HepG2 (cell line): ENCODE measurements at regions of chr14 and their contacts with region 1.

Region 1: DNA sequence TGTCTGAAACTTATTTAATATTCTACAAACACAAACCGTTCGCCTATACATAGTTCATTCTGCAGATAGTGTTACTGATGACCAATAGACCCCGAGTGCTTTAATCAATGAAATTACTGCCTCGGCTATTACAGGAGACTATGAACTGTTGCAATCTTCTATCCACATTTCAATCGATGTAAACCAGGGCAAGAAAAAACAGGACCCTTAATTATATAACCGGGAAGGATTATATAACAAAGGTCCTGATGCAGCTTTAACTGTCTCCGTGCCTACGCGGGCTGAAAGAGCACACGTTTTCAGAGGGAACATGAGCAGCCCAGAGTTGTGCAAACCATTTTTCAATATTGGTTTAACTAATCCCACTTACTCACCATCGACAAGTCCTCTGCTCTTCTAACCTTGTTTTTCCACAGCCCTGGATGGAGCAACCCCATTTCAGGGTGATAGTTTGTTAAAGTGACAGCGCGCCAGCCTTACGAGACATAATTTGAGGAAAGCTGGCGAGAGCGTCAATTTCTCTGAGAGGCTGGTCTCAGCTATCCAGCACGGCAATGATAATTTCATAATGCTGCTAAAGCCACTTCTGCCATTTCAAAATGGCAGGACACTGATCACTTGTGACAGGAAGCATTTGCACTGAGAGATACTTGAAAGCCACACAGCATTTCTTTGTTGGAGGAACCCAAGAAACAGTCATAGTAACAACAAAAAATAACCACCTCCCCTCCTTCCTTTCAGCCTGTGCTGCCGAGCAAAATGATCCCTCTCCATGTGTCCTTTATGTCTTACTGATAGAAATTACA is 184.6 kb downstream of the FOXN3 start:
- DNase-seq: peak; percentile 89
- ATAC-seq: peak; percentile 92
- H3K4me3 ChIP-seq: peak overlapping the region in 1 of 3 experiments; percentile 8; a peak in 1 of 6 replicates
- H3K27ac ChIP-seq: peak overlapping the region; percentile 45
- H3K4me1 ChIP-seq: peaks cover 74% of the 10 kb centered on the region
- H3K27me3 ChIP-seq: no peaks in the 10 kb centered on the region
- CTCF ChIP-seq: no peak; the same call in 1 of the 2 replicates
- EP300 ChIP-seq: peak; percentile 55 to 90; a peak in 2 of 4 replicates
- POLR2A ChIP-seq: no peak
- RAD21 ChIP-seq: no peak

Region 2: DNA sequence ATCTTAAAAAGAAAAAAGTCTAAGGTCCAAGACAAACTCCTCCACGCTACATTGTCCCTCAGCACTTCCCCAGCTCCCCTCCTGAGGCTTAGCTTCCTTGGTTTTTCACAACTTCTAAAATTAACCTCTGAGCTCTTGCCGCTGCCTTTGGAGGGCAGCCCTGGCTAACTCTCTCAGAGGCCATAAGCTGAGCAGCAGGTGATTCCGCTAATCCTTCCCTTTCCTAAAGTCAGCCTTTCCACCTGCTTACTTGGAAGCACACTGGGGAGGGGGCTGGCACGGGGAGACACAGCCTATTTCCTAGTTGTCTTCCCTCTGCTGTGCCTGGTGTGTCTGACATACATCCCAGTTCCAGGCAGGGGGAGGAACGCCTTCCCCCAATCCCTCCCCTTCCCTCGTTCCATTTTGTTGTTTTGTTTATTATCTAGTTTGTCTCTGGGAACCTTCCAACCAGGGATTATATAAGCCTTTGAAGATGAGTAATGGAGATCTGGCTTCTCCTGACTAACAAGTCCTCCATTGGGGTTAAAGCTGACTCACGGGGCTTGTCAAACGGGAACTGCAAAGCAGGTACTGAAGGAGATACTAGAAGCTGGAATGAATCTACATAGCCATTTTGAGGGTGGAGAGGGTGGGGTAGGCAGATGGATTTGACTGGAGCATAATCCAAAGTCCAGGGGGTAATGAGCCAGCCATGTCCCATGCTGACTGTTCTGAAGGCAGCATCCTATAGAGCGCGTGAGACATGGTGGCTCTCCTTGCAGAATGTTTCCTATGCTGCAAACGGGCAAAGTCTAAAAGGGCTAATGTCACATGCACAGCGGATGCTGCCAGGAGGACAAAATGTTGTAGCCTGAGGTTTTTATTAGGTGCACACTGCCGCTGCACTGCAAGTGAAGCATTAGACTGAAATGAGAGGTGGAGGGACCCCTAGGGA is 46.3 kb before region 1 on chr14:
- CTCF ChIA-PET with region 1: no interaction called
- POLR2A ChIA-PET with region 1: no interaction called
- in situ Hi-C with region 1: no loop called
- intact Hi-C with region 1: loop called (anchors 1 kb)
- DNase-seq: no peak
- ATAC-seq: peak; percentile 49
- H3K4me3 ChIP-seq: no peak overlapping the region
- H3K27ac ChIP-seq: no peak overlapping the region
- H3K4me1 ChIP-seq: peaks cover 20% of the 10 kb centered on the region
- H3K27me3 ChIP-seq: no peaks in the 10 kb centered on the region
- CTCF ChIP-seq: no peak
- EP300 ChIP-seq: no peak
- POLR2A ChIP-seq: no peak
- RAD21 ChIP-seq: no peak